ENCODE measurements at regions of chr17 and their contacts with region 1.

Region 1: DNA sequence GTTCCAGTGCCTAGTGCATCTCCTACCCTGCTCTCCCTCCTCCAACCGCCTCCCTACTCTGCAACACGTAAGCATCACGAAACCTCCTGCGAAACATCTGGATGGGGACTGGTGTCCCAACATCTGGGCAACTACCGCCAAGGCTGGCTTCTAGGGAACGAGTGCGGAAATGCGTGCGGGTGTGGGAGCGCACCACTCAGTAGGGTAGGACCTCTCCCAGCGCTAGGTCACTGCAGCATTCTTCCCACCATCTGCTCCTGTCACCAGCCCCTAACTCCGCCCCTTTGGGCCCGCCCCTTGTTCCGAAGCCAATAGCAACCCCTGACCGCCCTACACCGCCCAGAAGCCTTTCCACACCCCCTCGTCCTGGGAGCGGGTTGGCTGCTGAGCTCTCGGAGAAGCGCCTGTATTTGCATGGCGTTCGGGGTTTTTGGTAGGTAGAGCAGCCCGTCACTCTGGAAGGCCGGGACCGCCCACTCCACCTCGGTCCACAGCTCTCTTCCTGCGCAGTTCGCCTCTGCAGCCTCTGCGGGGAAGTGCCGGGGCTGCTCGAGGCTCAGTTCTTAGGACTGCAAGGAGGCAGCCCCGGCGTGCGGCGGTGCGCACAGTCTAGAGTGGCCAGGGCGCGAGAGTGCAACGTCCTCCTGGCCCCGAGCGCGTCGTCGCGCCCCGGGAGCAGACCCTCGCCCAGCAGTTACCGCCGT is at the start of gene HS3ST3B1:
- DNase-seq: peak; percentile 95
- ATAC-seq: peak; percentile 80
- H3K4me3 ChIP-seq: peak within 1 kb of the TSS; percentile 59 to 76 (median 60)
- H3K4me3 Mint-ChIP-seq: peak within 1 kb of the TSS; percentile 96
- H3K27ac ChIP-seq: peak within 1 kb of the TSS; percentile 39 to 64
- H3K27ac Mint-ChIP-seq: peak within 1 kb of the TSS; percentile 94
- H3K4me1 ChIP-seq: peaks cover 57 to 59% of the 10 kb centered on the region in 2 donors
- H3K4me1 Mint-ChIP-seq: peaks cover 59% of the 10 kb centered on the region
- H3K27me3 ChIP-seq: peaks cover 0 to 79% (median 46%) of the 10 kb centered on the region in 4 experiments
- H3K27me3 Mint-ChIP-seq: peaks cover 61% of the 10 kb centered on the region
- CTCF ChIP-seq: no peak
- total RNA-seq, gene HS3ST3B1: 8.4 and 9.0 TPM in 2 replicates

Region 2: GRCh38 chr17:13017659-13018459 is 1282.9 kb before region 1 on chr17 and contains the start of gene ELAC2:
- CTCF ChIA-PET with region 1: no interaction called
- POLR2A ChIA-PET with region 1: no interaction called
- intact Hi-C with region 1: loop called (anchors 2 kb)
- DNase-seq: peak; percentile 97
- ATAC-seq: peak; percentile 99
- H3K4me3 ChIP-seq: peak within 1 kb of the TSS; percentile 62 to 98 (median 75)
- H3K4me3 Mint-ChIP-seq: peak within 1 kb of the TSS; percentile 97
- H3K27ac ChIP-seq: peak within 1 kb of the TSS; percentile 69 to 80
- H3K27ac Mint-ChIP-seq: peak within 1 kb of the TSS; percentile 91
- H3K4me1 ChIP-seq: peaks cover 12 to 13% of the 10 kb centered on the region in 2 donors
- H3K4me1 Mint-ChIP-seq: peaks cover 20% of the 10 kb centered on the region
- H3K27me3 ChIP-seq: no peaks in the 10 kb centered on the region
- H3K27me3 Mint-ChIP-seq: no peaks in the 10 kb centered on the region
- CTCF ChIP-seq: peak; percentile 20
- total RNA-seq, gene ELAC2: 79.0 and 79.4 TPM in 2 replicates

Region 3: DNA sequence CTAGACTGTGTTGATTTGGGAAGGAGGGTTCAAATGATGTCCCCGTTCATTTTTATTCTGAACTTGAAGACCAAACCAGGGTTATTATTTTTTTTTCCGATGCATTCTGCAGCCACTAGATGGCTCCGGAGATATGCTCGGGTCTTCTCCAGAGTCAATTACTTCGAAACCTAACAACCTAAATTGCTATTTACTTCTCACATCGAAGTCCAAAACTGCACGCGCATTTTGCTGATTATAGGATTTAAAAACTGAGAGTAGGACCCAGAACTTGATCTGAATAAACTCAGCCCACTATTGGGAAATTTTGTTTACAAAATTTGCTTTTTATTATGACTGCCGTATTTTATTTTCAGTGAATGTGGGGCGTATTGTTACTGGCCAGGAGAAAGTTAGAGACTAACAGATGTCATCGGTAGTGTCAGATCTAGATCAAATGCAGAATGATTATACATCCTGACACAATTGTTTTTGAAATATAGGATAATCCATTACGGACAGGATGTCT is 962.8 kb before region 1 on chr17:
- CTCF ChIA-PET with region 1: no interaction called
- POLR2A ChIA-PET with region 1: no interaction called
- intact Hi-C with region 1: loop called (anchors 5 kb)
- DNase-seq: peak; percentile 32
- ATAC-seq: no peak
- H3K4me3 ChIP-seq: peak overlapping the region in 1 of 5 experiments; percentile 18
- H3K4me3 Mint-ChIP-seq: no peak overlapping the region
- H3K27ac ChIP-seq: no peak overlapping the region
- H3K27ac Mint-ChIP-seq: no peak overlapping the region
- H3K4me1 ChIP-seq: peaks cover 0 to 3% of the 10 kb centered on the region in 2 donors
- H3K4me1 Mint-ChIP-seq: peaks cover 2% of the 10 kb centered on the region
- H3K27me3 ChIP-seq: peaks cover 0 to 4% (median 2%) of the 10 kb centered on the region in 4 experiments
- H3K27me3 Mint-ChIP-seq: peaks cover 12% of the 10 kb centered on the region
- CTCF ChIP-seq: peak; percentile 71

Region 4: GRCh38 chr17:14069251-14070021 is 231.3 kb before region 1 on chr17 and contains the start of gene COX10:
- CTCF ChIA-PET with region 1: no interaction called
- POLR2A ChIA-PET with region 1: no interaction called
- intact Hi-C with region 1: loop called (anchors 2 kb)
- DNase-seq: peak; percentile 85
- ATAC-seq: peak; percentile 99
- H3K4me3 ChIP-seq: peak within 1 kb of the TSS; percentile 79 to 100 (median 97)
- H3K4me3 Mint-ChIP-seq: peak within 1 kb of the TSS; percentile 97
- H3K27ac ChIP-seq: peak within 1 kb of the TSS; percentile 65 to 73
- H3K27ac Mint-ChIP-seq: peak within 1 kb of the TSS; percentile 86
- H3K4me1 ChIP-seq: peaks cover 16 to 23% of the 10 kb centered on the region in 2 donors
- H3K4me1 Mint-ChIP-seq: peaks cover 35% of the 10 kb centered on the region
- H3K27me3 ChIP-seq: no peaks in the 10 kb centered on the region
- H3K27me3 Mint-ChIP-seq: no peaks in the 10 kb centered on the region
- CTCF ChIP-seq: no peak
- total RNA-seq, gene COX10: 19.2 and 21.8 TPM in 2 replicates

Region 5: DNA sequence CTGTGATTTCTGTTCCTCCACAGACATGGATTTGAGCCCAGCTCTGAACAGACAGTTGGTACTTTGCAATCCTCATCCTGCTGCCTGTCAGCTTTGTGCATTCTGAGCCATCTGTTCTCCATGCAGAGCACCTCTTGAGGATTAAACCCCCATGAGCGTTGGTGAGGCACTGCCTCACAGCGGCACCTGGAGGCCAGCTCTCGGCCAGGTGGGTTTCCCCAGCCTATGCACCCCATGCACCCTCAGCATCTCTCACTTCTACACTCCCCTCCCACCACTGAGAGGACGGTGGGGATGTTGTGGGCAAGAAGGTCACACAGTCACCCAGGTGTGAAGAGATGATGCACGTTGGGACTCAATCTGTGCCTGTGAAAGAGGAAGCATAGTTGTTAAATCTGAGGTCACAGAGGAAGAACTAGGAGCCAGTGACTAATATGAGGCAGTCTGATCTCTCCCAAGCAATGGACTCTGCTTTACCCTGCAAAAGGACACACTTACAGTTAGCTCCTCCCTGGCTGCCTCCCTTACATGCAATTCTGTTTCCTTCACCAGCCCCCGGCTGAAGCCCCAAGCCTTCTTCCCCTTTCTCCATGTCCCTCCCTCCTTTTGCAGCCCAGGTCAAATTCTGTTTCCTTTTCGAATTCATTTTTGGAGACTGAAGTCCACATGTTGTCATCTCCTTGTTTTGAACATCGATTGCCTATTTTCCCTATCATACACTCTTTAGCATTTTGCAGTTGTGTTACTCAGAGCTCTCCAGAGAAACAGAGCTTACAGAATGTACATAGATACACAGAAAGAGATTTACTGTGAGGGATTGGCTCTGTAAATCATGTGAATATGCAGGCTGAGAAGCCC is 58.7 kb after region 1 on chr17:
- CTCF ChIA-PET with region 1: interaction called, 5 read pairs
- POLR2A ChIA-PET with region 1: interaction called, 3 read pairs
- intact Hi-C with region 1: loop called (anchors 2 kb)
- DNase-seq: peak; percentile 90
- ATAC-seq: peak; percentile 99
- H3K4me3 ChIP-seq: no peak overlapping the region
- H3K4me3 Mint-ChIP-seq: peak overlapping the region; percentile 71
- H3K27ac ChIP-seq: no peak overlapping the region
- H3K27ac Mint-ChIP-seq: peak overlapping the region; percentile 66
- H3K4me1 ChIP-seq: peaks cover 28% of the 10 kb centered on the region in 2 donors
- H3K4me1 Mint-ChIP-seq: peaks cover 31% of the 10 kb centered on the region
- H3K27me3 ChIP-seq: peaks cover 0 to 30% (median 22%) of the 10 kb centered on the region in 4 experiments
- H3K27me3 Mint-ChIP-seq: peaks cover 10% of the 10 kb centered on the region
- CTCF ChIP-seq: peak; percentile 47

Region 6: DNA sequence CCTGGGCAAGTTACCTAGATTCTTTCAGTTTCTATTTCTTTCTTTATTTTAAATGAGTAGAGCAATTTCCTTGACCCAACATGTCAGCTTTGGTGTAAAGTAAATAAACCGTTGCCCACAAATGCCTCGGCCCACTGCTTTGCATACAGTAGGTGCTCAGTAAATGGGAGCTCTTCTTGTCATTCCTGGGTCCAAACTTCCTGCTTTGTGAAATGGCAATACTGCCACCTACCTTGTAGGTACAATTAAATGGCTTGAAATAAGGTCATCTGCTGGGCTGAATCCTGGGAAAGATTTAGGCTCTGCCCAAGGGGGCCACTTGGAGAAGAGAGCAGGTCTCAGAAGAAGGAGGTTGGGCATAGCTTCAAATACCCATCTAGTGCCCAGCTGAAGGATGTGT is 253.1 kb after region 1 on chr17:
- CTCF ChIA-PET with region 1: interaction called, 10 read pairs
- POLR2A ChIA-PET with region 1: no interaction called
- intact Hi-C with region 1: no loop called
- DNase-seq: no peak
- ATAC-seq: no peak
- H3K4me3 ChIP-seq: no peak overlapping the region
- H3K4me3 Mint-ChIP-seq: no peak overlapping the region
- H3K27ac ChIP-seq: no peak overlapping the region
- H3K27ac Mint-ChIP-seq: no peak overlapping the region
- H3K4me1 ChIP-seq: no peaks in the 10 kb centered on the region
- H3K4me1 Mint-ChIP-seq: peaks cover 3% of the 10 kb centered on the region
- H3K27me3 ChIP-seq: peaks cover 0 to 3% (median 0%) of the 10 kb centered on the region in 4 experiments
- H3K27me3 Mint-ChIP-seq: peaks cover 12% of the 10 kb centered on the region
- CTCF ChIP-seq: no peak

Measured in B cell (primary cell).